MCF 10A (cell line): ENCODE measurements at regions of chr13 and their contacts with region 1.

Region 1: GRCh38 chr13:45340926-45341750 is at the start of gene TPT1:
- DNase-seq: peak; percentile 99
- H3K4me3 Mint-ChIP-seq: peak within 1 kb of the TSS; percentile 89
- H3K27ac Mint-ChIP-seq: peak within 1 kb of the TSS; percentile 95
- H3K4me1 Mint-ChIP-seq: peaks cover 28% of the 10 kb centered on the region
- H3K27me3 Mint-ChIP-seq: no peaks in the 10 kb centered on the region
- CTCF ChIP-seq: no peak
- total RNA-seq, gene TPT1: 4,896 and 5,827 TPM in 2 replicates

Region 2: GRCh38 chr13:45055198-45055901 is 285.8 kb before region 1 on chr13:
- CTCF ChIA-PET with region 1: interaction called, 3 read pairs
- POLR2A ChIA-PET with region 1: interaction called, 18 read pairs
- intact Hi-C with region 1: no loop called
- DNase-seq: peak; percentile 93
- H3K4me3 Mint-ChIP-seq: peak overlapping the region; percentile 66
- H3K27ac Mint-ChIP-seq: peak overlapping the region; percentile 88
- H3K4me1 Mint-ChIP-seq: peaks cover 14% of the 10 kb centered on the region
- H3K27me3 Mint-ChIP-seq: no peaks in the 10 kb centered on the region
- CTCF ChIP-seq: no peak

Region 3: GRCh38 chr13:45167611-45168556 is 173.3 kb before region 1 on chr13:
- CTCF ChIA-PET with region 1: no interaction called
- POLR2A ChIA-PET with region 1: interaction called, 13 read pairs
- intact Hi-C with region 1: no loop called
- DNase-seq: peak; percentile 99
- H3K4me3 Mint-ChIP-seq: peak overlapping the region; percentile 46
- H3K27ac Mint-ChIP-seq: peak overlapping the region; percentile 90
- H3K4me1 Mint-ChIP-seq: peaks cover 16% of the 10 kb centered on the region
- H3K27me3 Mint-ChIP-seq: no peaks in the 10 kb centered on the region
- CTCF ChIP-seq: no peak

Region 4: DNA sequence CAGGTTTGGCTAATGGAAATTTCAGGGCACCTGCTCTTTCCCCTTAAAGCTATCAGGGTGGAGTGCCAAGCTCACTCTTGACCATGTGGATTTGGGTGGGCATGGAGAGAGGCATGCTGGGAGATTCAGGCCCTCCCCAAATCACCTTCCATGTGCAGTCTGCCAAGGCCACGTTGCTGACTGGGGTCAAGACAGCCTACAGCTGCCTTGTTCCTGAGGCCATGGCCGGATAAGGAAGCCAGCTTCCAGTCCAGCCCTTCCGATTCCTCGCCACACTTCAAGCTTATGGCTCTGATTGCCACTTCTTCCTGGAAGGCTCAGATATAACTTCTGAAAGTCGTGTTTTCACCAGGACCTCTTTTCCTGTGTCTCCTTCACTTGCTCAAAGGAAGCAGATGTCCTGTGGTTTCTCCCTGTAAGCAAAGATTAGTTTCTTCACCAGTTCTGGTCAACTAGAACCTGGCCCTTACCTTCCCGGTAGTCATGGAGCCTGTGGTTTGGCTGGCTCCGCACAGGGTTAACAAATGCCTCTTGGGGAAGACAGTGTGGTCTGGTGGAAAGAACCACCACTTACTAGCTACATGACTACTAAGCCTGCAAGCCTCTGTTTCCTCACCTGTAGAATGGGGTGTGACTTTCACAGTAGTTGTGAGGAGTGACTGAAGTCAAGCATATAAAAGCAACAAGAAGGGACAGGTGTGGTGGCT is 16.0 kb after region 1 on chr13:
- CTCF ChIA-PET with region 1: interaction called, 3 read pairs
- POLR2A ChIA-PET with region 1: interaction called, 49 read pairs
- intact Hi-C with region 1: no loop called
- DNase-seq: no peak
- H3K4me3 Mint-ChIP-seq: no peak overlapping the region
- H3K27ac Mint-ChIP-seq: no peak overlapping the region
- H3K4me1 Mint-ChIP-seq: peaks cover 7% of the 10 kb centered on the region
- H3K27me3 Mint-ChIP-seq: no peaks in the 10 kb centered on the region
- CTCF ChIP-seq: no peak

Region 5: DNA sequence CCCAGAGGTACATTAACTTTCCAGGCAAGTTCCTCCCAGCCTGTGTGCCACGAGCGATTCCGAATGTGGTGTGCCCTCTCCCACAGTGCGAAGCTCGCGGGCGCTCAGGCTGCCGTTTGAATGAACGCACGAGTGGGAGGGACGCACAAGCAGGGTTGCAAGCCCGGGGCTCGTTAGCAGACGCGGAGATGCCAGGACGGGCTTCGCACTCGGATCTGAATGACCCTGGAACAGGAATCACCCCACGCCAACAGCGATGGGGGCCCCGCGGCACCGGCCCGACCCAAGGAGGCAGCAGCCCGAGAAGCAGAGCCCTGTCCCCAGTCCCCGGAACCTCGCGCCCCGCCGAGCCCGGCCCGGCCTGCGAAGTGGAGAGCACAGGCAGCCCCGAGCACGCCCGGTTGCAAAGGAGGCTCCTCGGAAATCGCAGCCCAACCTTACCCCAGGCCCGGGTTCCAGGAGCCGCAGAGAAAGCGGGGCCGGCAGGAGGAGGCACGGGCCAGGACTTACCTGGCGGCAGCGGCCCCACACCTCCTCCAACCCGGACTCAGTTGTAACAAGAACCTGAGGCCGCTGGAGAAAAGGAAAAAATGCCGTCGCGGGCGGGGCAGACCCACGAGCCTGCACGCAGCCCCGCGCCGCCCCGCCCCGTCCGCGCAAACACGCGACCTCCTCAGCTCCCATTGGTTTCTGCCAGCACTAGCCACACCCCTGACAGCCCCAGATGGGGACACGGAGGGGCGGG is 76.8 kb after region 1 on chr13 and contains the start of gene SLC25A30:
- CTCF ChIA-PET with region 1: interaction called, 3 read pairs
- POLR2A ChIA-PET with region 1: interaction called, 36 read pairs
- intact Hi-C with region 1: no loop called
- DNase-seq: peak; percentile 83
- H3K4me3 Mint-ChIP-seq: peak within 1 kb of the TSS; percentile 81
- H3K27ac Mint-ChIP-seq: peak within 1 kb of the TSS; percentile 87
- H3K4me1 Mint-ChIP-seq: peaks cover 6% of the 10 kb centered on the region
- H3K27me3 Mint-ChIP-seq: no peaks in the 10 kb centered on the region
- CTCF ChIP-seq: no peak
- total RNA-seq, gene SLC25A30: 10.5 and 11.9 TPM in 2 replicates

Region 6: GRCh38 chr13:45482571-45483173 is 141.5 kb after region 1 on chr13:
- CTCF ChIA-PET with region 1: no interaction called
- POLR2A ChIA-PET with region 1: interaction called, 11 read pairs
- intact Hi-C with region 1: no loop called
- DNase-seq: peak; percentile 61
- H3K4me3 Mint-ChIP-seq: peak overlapping the region; percentile 54
- H3K27ac Mint-ChIP-seq: peak overlapping the region; percentile 91
- H3K4me1 Mint-ChIP-seq: peaks cover 13% of the 10 kb centered on the region
- H3K27me3 Mint-ChIP-seq: no peaks in the 10 kb centered on the region
- CTCF ChIP-seq: no peak

Region 7: GRCh38 chr13:45546218-45546763 is 205.2 kb after region 1 on chr13:
- CTCF ChIA-PET with region 1: no interaction called
- POLR2A ChIA-PET with region 1: no interaction called
- intact Hi-C with region 1: no loop called
- DNase-seq: no peak
- H3K4me3 Mint-ChIP-seq: no peak overlapping the region
- H3K27ac Mint-ChIP-seq: no peak overlapping the region
- H3K4me1 Mint-ChIP-seq: no peaks in the 10 kb centered on the region
- H3K27me3 Mint-ChIP-seq: peaks cover 30% of the 10 kb centered on the region
- CTCF ChIP-seq: no peak